Activated CD4-positive, alpha-beta memory T cell treated with anti-CD3 and anti-CD28 coated beads for 36 hours (primary cell): ENCODE measurements at regions of chr22 and their contacts with region 1.

Region 1: GRCh38 chr22:41301105-41302020 is at the start of gene ZC3H7B:
- DNase-seq: peak; percentile 90
- H3K4me3 Mint-ChIP-seq: peak within 1 kb of the TSS; percentile 72
- H3K27ac Mint-ChIP-seq: peak within 1 kb of the TSS; percentile 71
- H3K4me1 Mint-ChIP-seq: peaks cover 32% of the 10 kb centered on the region
- H3K27me3 Mint-ChIP-seq: no peaks in the 10 kb centered on the region
- total RNA-seq, gene ZC3H7B: 37.7 to 39.3 TPM

Region 2: DNA sequence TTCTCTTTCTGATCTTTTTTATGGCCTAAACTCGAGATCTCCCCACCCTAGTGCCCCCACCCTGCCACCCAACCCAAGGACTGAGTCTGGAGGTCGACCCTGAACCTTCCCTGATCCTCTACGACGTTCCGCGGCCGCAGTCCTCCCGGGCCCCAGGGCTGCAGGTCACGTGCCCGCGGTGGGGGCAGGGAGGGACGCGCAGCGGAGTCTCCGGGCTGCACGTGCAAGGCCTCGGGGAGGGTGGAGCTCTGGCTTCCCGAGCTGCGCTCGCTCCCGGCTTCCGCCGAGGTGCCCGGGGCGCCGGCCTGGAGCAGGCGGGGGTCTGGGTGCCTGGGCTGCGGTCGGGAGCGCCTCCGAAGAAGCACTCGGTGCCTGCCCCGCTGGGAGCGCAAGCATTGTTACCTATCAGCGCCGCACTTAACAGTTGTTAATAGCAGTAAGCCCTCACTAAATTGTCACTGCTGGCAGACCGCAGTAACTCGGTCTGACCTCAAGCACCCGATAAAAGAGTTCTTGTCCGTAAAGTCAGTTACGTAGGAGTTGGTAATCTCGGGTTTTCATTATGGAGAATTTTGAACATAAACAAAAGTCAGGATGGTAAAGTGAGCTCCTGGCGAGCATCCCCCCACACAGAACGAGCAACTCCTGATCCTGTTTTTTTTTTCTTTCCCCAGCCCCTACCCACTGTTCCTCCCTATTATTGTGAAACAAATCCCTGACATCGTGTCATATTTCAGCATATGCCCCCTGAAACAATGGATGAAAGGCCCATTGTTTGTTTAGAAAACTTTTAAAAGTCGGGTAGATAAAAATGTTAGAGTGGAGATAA is 278.7 kb before region 1 on chr22:
- CTCF ChIA-PET with region 1: no interaction called
- POLR2A ChIA-PET with region 1: no interaction called
- intact Hi-C with region 1: loop called (anchors 5 kb)
- DNase-seq: peak; percentile 90
- H3K4me3 Mint-ChIP-seq: peak overlapping the region; percentile 79
- H3K27ac Mint-ChIP-seq: peak overlapping the region; percentile 70
- H3K4me1 Mint-ChIP-seq: peaks cover 14% of the 10 kb centered on the region
- H3K27me3 Mint-ChIP-seq: no peaks in the 10 kb centered on the region

Region 3: DNA sequence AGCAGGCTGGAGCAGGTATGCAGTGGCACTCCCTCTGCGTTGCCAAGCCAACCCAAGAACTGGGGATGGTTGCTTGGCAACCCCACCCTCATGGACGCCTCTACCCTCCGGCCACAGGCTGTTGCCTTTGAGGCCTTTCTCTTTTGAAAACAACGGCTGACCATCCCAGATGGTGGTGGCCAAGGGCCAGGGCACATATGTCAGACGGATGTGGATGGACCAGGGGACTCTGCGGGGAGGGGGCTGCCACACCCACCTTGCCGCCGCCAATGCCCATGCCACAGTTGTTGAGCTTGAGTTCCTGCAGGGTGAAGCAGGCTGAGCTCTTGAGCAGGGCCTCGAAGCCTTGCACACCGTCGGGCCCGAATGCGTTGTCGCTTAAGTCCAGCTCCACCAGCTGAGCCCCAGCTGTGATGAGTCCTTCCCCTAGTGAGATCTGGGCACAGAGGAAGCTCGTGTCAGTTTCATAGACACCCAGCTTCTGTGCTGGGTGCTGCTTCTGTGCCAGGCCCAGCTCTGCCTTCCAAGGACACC is 36.9 kb before region 1 on chr22:
- CTCF ChIA-PET with region 1: no interaction called
- POLR2A ChIA-PET with region 1: no interaction called
- intact Hi-C with region 1: no loop called
- DNase-seq: no peak
- H3K4me3 Mint-ChIP-seq: no peak overlapping the region
- H3K27ac Mint-ChIP-seq: no peak overlapping the region
- H3K4me1 Mint-ChIP-seq: peaks cover 6% of the 10 kb centered on the region
- H3K27me3 Mint-ChIP-seq: no peaks in the 10 kb centered on the region

Region 4: GRCh38 chr22:41324821-41325528 is 23.6 kb after region 1 on chr22:
- CTCF ChIA-PET with region 1: no interaction called
- POLR2A ChIA-PET with region 1: no interaction called
- intact Hi-C with region 1: no loop called
- DNase-seq: no peak
- H3K4me3 Mint-ChIP-seq: no peak overlapping the region
- H3K27ac Mint-ChIP-seq: no peak overlapping the region
- H3K4me1 Mint-ChIP-seq: no peaks in the 10 kb centered on the region
- H3K27me3 Mint-ChIP-seq: no peaks in the 10 kb centered on the region

Region 5: DNA sequence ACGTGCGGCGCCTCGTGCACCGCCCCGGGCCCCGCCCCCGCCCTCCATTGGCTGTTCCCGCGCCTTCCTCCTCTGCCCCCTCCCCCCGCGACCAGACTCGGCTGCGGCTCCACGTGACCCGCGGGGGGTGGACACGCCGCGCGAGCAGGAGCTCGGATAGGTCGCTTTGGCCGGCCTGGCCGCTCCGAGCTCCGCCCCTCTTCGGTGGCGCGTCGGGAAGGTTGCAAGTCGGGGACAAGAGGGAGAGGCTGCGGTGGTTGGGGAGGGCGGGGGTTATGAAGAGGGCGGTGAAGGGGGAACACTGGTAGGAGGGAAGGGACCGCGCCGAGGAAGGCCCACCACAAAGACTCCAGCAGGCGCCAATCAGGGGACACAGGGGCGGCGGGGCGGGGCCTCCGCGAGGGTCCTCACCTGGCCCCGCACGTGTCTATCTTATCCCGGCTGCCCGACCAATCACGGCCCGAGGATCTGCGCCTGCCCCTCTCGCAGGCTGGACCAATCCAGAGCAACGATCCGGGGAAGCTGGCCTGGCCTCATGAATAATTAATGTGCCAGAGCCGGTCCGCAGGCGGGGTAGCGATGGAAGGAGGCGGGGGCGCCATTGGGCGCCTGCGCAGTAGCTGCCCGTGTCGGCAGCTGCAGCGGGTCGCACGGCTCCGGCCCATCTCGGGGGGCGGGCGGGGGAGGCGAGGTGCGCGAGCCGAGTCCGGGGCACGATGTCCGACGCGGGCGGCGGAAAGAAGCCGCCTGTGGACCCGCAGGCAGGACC is 80.2 kb after region 1 on chr22 and contains the start of gene TEF:
- CTCF ChIA-PET with region 1: no interaction called
- POLR2A ChIA-PET with region 1: no interaction called
- intact Hi-C with region 1: loop called (anchors 5 kb)
- DNase-seq: peak; percentile 98
- H3K4me3 Mint-ChIP-seq: peak within 1 kb of the TSS; percentile 81
- H3K27ac Mint-ChIP-seq: peak within 1 kb of the TSS; percentile 86
- H3K4me1 Mint-ChIP-seq: peaks cover 15% of the 10 kb centered on the region
- H3K27me3 Mint-ChIP-seq: no peaks in the 10 kb centered on the region
- total RNA-seq, gene TEF: 1.4 to 1.6 TPM

Region 6: GRCh38 chr22:41468381-41469217 is 167.2 kb after region 1 on chr22 and contains the starts of genes ACO2 and PHF5A:
- CTCF ChIA-PET with region 1: interaction called, 3 read pairs
- POLR2A ChIA-PET with region 1: no interaction called
- intact Hi-C with region 1: loop called (anchors 5 kb)
- DNase-seq: peak; percentile 99
- H3K4me3 Mint-ChIP-seq: peak within 1 kb of the TSS; percentile 93
- H3K27ac Mint-ChIP-seq: peak within 1 kb of the TSS; percentile 99
- H3K4me1 Mint-ChIP-seq: peaks cover 51% of the 10 kb centered on the region
- H3K27me3 Mint-ChIP-seq: no peaks in the 10 kb centered on the region
- total RNA-seq, gene ACO2: 103 to 105 TPM
- total RNA-seq, gene PHF5A: 55.4 to 60.0 TPM